ENCODE measurements at regions of chr17 and their contacts with region 1.

Region 1: GRCh38 chr17:77817953-77818352 is 140.6 kb upstream of the TNRC6C start:
- DNase-seq: no peak
- H3K4me3 ChIP-seq: no peak overlapping the region
- H3K27ac ChIP-seq: no peak overlapping the region
- H3K4me1 ChIP-seq: no peaks in the 10 kb centered on the region
- H3K27me3 ChIP-seq: peaks cover 47% of the 10 kb centered on the region
- CTCF ChIP-seq: no peak

Region 2: GRCh38 chr17:77160091-77160874 is 657.7 kb before region 1 on chr17:
- CTCF ChIA-PET with region 1: interaction called, 11 read pairs
- POLR2A ChIA-PET with region 1: no interaction called
- intact Hi-C with region 1: no loop called
- DNase-seq: no peak
- H3K4me3 ChIP-seq: no peak overlapping the region
- H3K27ac ChIP-seq: no peak overlapping the region
- H3K4me1 ChIP-seq: no peaks in the 10 kb centered on the region
- H3K27me3 ChIP-seq: no peaks in the 10 kb centered on the region
- CTCF ChIP-seq: no peak

Region 3: GRCh38 chr17:77834170-77835115 is 16.5 kb after region 1 on chr17:
- CTCF ChIA-PET with region 1: no interaction called
- POLR2A ChIA-PET with region 1: no interaction called
- intact Hi-C with region 1: no loop called
- DNase-seq: peak; percentile 8 to 48
- H3K4me3 ChIP-seq: no peak overlapping the region
- H3K27ac ChIP-seq: no peak overlapping the region
- H3K4me1 ChIP-seq: no peaks in the 10 kb centered on the region
- H3K27me3 ChIP-seq: peaks cover 45% of the 10 kb centered on the region
- CTCF ChIP-seq: no peak

Measured in PC-9 (cell line).